Left cardiac atrium (tissue), 4 donors: ENCODE measurements at regions of chr10 and their contacts with region 1.

Region 1: DNA sequence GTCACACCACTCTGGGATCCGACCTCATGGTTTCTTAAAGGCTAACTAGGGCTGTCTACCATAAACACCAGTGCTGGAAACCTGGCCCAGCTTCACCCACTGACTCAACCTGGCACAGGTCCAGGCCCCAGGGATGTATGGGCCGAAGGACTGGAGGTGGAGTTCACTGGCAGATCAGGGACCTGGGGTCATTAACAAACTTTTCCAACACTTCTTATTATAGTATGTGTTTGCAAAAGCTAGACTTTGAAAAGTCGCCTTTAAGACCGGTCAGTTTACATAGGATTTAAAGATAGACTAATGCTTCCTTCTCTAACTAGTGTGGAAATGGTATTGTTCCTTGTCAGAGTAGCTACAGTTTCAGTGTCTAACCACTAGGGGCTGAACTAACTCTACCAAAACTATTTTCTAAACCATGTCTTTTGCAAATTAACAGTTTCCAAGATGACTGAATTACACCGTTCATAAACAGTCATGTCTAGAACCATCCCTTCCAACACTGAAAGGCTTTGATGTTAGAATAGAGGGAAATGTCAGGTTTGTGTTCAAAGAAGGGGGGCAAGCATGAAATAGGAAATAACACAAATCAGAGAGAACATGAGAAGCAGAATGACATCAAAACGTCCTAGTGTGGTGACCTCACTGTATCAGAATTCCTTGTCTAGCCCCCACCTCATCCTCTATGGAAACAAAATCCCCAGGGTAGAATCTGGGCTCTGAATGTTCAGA is 29.7 kb downstream of the STN1 start:
- DNase-seq: peak; percentile 79
- ATAC-seq: peak; percentile 74 to 83

Region 2: DNA sequence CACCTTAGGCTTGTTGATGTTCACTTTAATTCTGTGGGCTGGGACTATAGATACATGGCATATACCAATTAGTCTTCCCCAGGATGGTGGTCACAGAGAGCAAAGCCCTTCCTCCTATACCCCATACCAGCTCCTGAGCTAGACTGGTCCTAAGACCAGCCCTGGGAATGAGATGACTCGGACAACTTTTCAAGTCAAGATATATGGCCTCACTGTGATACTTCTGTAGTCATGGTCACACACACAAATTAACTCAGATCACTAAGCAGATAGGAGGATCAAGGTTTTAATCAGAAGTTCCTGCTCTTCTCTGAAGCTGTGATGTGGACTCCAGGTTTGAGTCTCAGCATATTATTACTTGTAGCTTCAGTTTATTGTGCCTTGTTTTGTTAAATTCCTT is 131.7 kb after region 1 on chr10:
- intact Hi-C with region 1: loop called in 1 of 2 experiments (anchors 5 kb)
- DNase-seq: no peak
- ATAC-seq: no peak

Region 3: DNA sequence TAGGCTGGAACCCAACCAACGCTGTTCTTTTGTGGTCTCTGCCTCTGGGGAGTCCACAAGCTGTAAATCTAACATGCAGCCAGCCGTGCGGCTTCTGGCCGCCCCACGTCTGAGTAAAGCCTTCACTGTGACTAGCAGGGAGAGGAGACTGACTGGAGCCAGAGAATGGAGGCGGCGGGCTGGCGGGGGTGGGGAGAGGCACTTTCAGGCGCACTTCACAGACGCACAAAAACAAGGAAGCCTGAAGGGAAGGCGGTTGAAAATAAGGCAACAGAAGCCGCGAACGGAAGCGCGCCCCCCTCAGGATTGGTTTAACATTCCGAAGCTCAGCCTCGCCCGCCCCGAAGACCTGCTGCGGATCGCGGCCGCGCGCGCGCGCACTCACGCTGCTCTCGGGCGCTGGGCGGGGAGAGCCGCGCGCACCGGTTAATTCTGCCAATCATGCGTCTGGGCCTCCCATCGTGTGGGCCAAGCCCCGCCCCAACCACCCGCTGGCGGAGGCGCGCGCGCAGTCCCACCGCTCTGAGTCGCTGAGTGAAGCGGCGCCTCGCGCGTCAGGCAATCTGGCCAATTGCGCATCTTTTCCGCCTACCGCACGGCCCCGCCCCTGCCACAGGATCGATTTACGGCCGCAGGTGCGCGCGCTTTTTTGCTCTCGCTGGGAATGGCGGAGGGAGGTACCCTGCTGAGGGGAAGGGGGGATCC is 233.4 kb after region 1 on chr10 and contains the start of gene SFR1:
- intact Hi-C with region 1: loop called in 1 of 2 experiments (anchors 5 kb)
- DNase-seq: peak; percentile 99
- ATAC-seq: peak; percentile 96 to 97
- total RNA-seq, gene SFR1: 6.5 to 7.0 TPM

Region 4: DNA sequence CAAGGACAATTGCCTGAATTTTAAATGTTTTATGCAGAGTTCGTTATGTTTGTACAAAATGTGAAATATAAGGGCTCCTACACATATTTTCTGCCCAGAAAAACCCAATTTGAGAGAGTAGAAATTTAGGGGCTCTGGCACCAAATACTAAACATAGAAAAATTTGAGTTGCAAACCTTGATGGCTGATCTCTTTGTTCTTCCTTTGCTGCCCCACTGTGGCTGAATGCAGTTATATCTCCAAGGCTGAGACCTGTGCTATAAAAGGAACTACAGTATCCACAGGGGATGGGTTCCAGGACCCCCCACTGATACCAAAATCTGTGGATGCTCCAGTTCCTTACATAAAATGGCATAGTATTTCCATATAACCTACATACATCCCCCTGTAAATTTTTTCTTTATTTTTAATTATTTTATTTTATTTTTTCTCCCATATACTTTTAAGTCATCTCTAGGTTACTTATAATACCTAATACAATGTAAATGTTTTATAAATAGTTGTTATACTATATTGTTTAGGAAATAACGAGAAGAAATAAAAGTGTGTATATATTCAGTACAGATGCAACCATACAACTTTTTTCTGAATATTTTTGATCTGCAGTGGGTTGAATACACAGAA is 321.4 kb after region 1 on chr10:
- intact Hi-C with region 1: loop called in 1 of 2 experiments (anchors 5 kb)
- DNase-seq: peak; percentile 30
- ATAC-seq: peak in 1 of 2 donors; percentile 53